ENCODE measurements at regions of chr1 and their contacts with region 1.

Region 1: DNA sequence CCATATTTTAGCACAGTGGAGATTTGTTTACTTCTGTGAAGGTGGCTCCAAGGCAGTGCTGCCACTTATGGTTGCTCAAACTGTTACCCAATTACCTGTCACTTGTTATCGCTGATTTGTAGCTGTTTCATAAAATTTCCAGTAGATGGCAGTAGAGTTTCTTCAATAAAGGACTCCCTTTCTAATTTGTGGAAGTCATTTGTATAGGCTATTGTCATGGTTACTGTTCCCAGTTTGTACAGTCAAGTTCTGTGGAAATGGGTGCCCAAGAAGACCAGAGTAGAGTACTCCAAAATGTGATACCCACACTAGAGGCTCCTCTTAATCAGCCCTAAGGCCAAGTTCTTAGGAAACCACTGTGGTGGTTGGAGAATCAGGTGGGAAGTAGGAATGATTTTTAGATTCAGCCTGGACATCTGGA is 186.1 kb downstream of the CLEC20A start:
- DNase-seq: peak; percentile 28
- H3K4me3 Mint-ChIP-seq: no peak overlapping the region
- H3K27ac Mint-ChIP-seq: peak overlapping the region; percentile 0
- H3K4me1 Mint-ChIP-seq: peaks cover 38% of the 10 kb centered on the region
- H3K27me3 Mint-ChIP-seq: no peaks in the 10 kb centered on the region
- CTCF ChIP-seq: peak; percentile 61

Region 2: DNA sequence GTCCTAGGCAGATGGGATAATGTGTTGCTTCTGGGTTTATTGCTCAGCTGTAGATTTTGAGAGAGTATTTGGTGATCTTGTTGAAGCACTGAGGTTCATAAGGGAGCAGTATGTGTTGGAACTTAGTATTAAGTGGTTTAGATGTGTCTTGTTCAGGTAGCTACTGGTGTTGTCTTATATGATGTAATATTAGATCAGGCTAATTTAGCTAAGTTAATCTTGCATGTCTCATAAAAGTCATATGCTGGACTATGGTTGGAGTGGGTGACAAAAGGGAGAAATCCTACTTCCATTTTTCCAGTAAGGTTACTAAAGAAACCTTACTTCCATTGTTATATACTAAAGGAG is 10.4 kb before region 1 on chr1:
- CTCF ChIA-PET with region 1: interaction called, 16 read pairs
- intact Hi-C with region 1: no loop called
- DNase-seq: no peak
- H3K4me3 Mint-ChIP-seq: no peak overlapping the region
- H3K27ac Mint-ChIP-seq: peak overlapping the region; percentile 32
- H3K4me1 Mint-ChIP-seq: peaks cover 32% of the 10 kb centered on the region
- H3K27me3 Mint-ChIP-seq: no peaks in the 10 kb centered on the region
- CTCF ChIP-seq: no peak

Region 3: GRCh38 chr1:178461676-178462075 is 151.0 kb after region 1 on chr1:
- CTCF ChIA-PET with region 1: no interaction called
- intact Hi-C with region 1: loop called (anchors 5 kb)
- DNase-seq: no peak
- H3K4me3 Mint-ChIP-seq: no peak overlapping the region
- H3K27ac Mint-ChIP-seq: peak overlapping the region; percentile 36
- H3K4me1 Mint-ChIP-seq: peaks cover 9% of the 10 kb centered on the region
- H3K27me3 Mint-ChIP-seq: no peaks in the 10 kb centered on the region
- CTCF ChIP-seq: no peak

Region 4: GRCh38 chr1:178518894-178519293 is 208.2 kb after region 1 on chr1:
- CTCF ChIA-PET with region 1: no interaction called
- intact Hi-C with region 1: loop called (anchors 5 kb)
- DNase-seq: no peak
- H3K4me3 Mint-ChIP-seq: no peak overlapping the region
- H3K27ac Mint-ChIP-seq: no peak overlapping the region
- H3K4me1 Mint-ChIP-seq: no peaks in the 10 kb centered on the region
- H3K27me3 Mint-ChIP-seq: no peaks in the 10 kb centered on the region
- CTCF ChIP-seq: no peak

Region 5: GRCh38 chr1:179002552-179003345 is 692.1 kb after region 1 on chr1:
- CTCF ChIA-PET with region 1: interaction called, 5 read pairs
- intact Hi-C with region 1: loop called (anchors 5 kb)
- DNase-seq: peak; percentile 88
- H3K4me3 Mint-ChIP-seq: peak overlapping the region; percentile 30
- H3K27ac Mint-ChIP-seq: no peak overlapping the region
- H3K4me1 Mint-ChIP-seq: peaks cover 10% of the 10 kb centered on the region
- H3K27me3 Mint-ChIP-seq: no peaks in the 10 kb centered on the region
- CTCF ChIP-seq: peak; percentile 97

Measured in Calu3 (cell line).